HepG2 (cell line): ENCODE measurements at regions of chr22 and their contacts with region 1.

Region 1: GRCh38 chr22:36481393-36482168 is at the start of gene TXN2:
- DNase-seq: peak; percentile 91
- ATAC-seq: peak; percentile 92
- H3K4me3 ChIP-seq: peak within 1 kb of the TSS; percentile 69 to 88 (median 88)
- H3K27ac ChIP-seq: peak within 1 kb of the TSS; percentile 96
- H3K4me1 ChIP-seq: peaks cover 24% of the 10 kb centered on the region
- H3K27me3 ChIP-seq: no peaks in the 10 kb centered on the region; a peak in 1 of 5 replicates
- CTCF ChIP-seq: no peak
- EP300 ChIP-seq: peak; percentile 10 to 13; a peak in 2 of 4 replicates
- POLR2A ChIP-seq: peak; percentile 89 to 90
- RAD21 ChIP-seq: no peak
- total RNA-seq, gene TXN2: 41.4 and 61.4 TPM in 2 replicates

Region 2: DNA sequence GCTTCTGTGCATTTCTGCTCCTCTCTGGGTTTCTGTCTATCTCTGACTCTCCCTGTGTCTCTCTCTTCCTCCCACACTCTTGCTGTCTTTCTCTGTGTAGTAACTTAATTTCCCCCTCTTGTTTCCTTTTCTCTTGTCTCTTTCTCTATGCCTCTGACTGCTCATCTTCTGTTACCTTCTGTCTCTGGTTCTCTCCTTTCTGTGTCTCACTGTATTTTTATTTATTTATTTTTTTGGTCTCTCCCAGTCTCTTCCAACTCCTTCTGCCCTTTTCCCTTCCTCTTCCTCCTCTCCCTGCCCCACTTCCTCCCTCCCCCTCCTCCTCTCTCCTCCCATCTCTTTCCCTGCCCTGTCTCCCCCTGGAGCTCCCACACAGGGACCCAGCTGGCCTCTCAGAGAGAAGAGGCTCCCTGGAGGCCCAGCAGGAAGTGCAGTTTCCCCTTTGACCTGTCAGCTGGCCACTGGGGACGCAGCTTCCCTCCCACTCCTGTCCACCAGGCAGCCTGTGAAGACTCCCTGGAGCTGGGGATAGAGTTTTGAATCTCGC is 55.5 kb before region 1 on chr22:
- CTCF ChIA-PET with region 1: no interaction called
- POLR2A ChIA-PET with region 1: no interaction called
- in situ Hi-C with region 1: no loop called
- intact Hi-C with region 1: no loop called
- DNase-seq: peak; percentile 74
- ATAC-seq: peak; percentile 93
- H3K4me3 ChIP-seq: no peak overlapping the region
- H3K27ac ChIP-seq: peak overlapping the region; percentile 71
- H3K4me1 ChIP-seq: peaks cover 69% of the 10 kb centered on the region
- H3K27me3 ChIP-seq: no peaks in the 10 kb centered on the region
- CTCF ChIP-seq: peak; percentile 53
- EP300 ChIP-seq: no peak; a peak in 1 of 4 replicates
- POLR2A ChIP-seq: peak in 1 of 2 experiments; percentile 34; a peak in 1 of 4 replicates
- RAD21 ChIP-seq: no peak

Region 3: DNA sequence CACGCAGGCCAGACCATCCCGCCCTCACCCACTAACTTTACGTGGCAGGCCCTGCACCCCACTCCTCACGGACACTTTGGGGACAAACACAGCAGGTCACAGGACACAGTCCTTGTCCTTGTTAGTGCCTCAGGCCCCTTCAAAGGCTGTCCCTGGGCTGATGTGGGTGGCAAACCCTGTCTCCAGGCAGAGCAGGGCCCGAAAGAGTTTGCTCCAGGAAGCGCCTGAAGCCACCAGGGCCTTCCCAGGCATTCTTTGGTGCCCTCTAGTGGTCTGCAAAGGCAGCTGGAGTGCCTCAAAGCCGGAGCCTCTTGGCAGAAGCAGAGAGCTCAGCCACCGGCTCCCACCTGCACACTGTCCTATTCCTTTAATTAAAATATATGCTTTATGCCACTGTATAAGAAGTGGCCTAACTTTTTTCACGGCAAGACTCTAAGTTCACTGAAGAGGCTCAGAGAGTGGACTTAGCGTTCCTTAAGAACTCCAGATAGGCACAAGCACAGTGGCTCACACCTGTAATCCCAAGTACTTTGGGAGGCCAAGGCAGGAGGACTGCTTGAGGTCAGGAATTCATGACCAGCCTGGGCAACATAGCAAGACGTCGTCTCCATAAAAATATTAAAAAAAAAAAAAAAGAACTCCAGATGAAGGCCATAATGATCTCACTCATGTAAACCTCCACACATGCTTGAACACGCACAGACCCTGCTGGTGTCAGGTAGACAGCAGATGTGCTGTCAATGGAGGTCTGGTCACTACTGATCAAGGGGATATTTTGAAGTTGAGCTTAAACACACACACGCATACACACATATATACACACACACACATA is 11.2 kb before region 1 on chr22:
- CTCF ChIA-PET with region 1: no interaction called
- POLR2A ChIA-PET with region 1: interaction called, 18 read pairs
- in situ Hi-C with region 1: no loop called
- intact Hi-C with region 1: no loop called
- DNase-seq: peak; percentile 76
- ATAC-seq: peak; percentile 90
- H3K4me3 ChIP-seq: no peak overlapping the region
- H3K27ac ChIP-seq: peak overlapping the region; percentile 45
- H3K4me1 ChIP-seq: peaks cover 10% of the 10 kb centered on the region
- H3K27me3 ChIP-seq: no peaks in the 10 kb centered on the region
- CTCF ChIP-seq: peak; percentile 96
- EP300 ChIP-seq: no peak
- POLR2A ChIP-seq: no peak
- RAD21 ChIP-seq: peak; percentile 96

Region 4: GRCh38 chr22:36541831-36542411 is 60.3 kb after region 1 on chr22:
- CTCF ChIA-PET with region 1: no interaction called
- POLR2A ChIA-PET with region 1: no interaction called
- in situ Hi-C with region 1: no loop called
- intact Hi-C with region 1: no loop called
- DNase-seq: no peak
- ATAC-seq: no peak
- H3K4me3 ChIP-seq: no peak overlapping the region
- H3K27ac ChIP-seq: no peak overlapping the region
- H3K4me1 ChIP-seq: 0 out of 2 replicates have a peak, but pooled peaks cover 9% of the 10 kb centered on the region
- H3K27me3 ChIP-seq: peaks cover 5 to 47% of the 10 kb centered on the region in 2 experiments; a peak in 4 of 5 replicates
- CTCF ChIP-seq: no peak
- EP300 ChIP-seq: no peak
- POLR2A ChIP-seq: no peak
- RAD21 ChIP-seq: no peak

Region 5: GRCh38 chr22:36921309-36922104 is 439.9 kb after region 1 on chr22:
- CTCF ChIA-PET with region 1: no interaction called
- POLR2A ChIA-PET with region 1: no interaction called
- in situ Hi-C with region 1: no loop called
- intact Hi-C with region 1: no loop called
- DNase-seq: no peak
- ATAC-seq: no peak
- H3K4me3 ChIP-seq: no peak overlapping the region
- H3K27ac ChIP-seq: no peak overlapping the region
- H3K4me1 ChIP-seq: no peaks in the 10 kb centered on the region
- H3K27me3 ChIP-seq: peaks cover 7 to 48% of the 10 kb centered on the region in 2 experiments; a peak in 3 of 5 replicates
- CTCF ChIP-seq: no peak
- EP300 ChIP-seq: no peak
- POLR2A ChIP-seq: no peak
- RAD21 ChIP-seq: no peak